Natural killer cell (primary cell): ENCODE measurements at regions of chrX and their contacts with region 1.

Region 1: GRCh38 chrX:72100824-72101351 is 30.8 kb downstream of the RTL5 start:
- DNase-seq: peak; percentile 75 to 90
- ATAC-seq: peak; percentile 61 to 85 (median 75)
- H3K4me3 ChIP-seq: peak overlapping the region; percentile 78
- H3K4me3 Mint-ChIP-seq: peak overlapping the region; percentile 92
- H3K27ac ChIP-seq: peak overlapping the region; percentile 96
- H3K27ac Mint-ChIP-seq: peak overlapping the region; percentile 88 to 91
- H3K4me1 ChIP-seq: peaks cover 71% of the 10 kb centered on the region
- H3K4me1 Mint-ChIP-seq: peaks cover 48 to 67% of the 10 kb centered on the region in 2 donors
- H3K27me3 ChIP-seq: no peaks in the 10 kb centered on the region
- H3K27me3 Mint-ChIP-seq: peaks cover 0 to 30% of the 10 kb centered on the region in 2 donors
- CTCF ChIP-seq: no peak

Region 2: DNA sequence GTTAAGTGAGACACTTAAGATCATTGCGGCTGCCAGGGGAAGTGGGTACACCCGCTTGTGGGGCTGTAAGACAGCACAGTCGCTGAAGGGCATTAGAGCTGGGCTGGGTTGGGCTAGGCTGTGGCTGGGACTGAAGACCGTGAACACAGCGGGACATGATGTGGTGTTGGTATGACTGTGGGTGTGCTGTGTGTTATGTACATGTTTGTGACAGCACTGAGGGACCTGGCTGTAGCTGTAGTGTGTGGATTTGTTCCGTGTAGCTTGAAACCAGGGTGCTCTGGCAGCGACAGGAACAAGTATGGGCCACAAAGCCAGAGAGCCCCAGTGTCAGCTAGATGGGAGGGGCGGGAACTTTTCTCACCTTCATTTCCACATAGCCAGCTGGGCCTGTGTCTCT is 108.2 kb before region 1 on chrX:
- intact Hi-C with region 1: loop called (anchors 1 kb)
- DNase-seq: peak; percentile 70 to 82
- ATAC-seq: peak; percentile 94 to 96 (median 96)
- H3K4me3 ChIP-seq: no peak overlapping the region
- H3K4me3 Mint-ChIP-seq: peak overlapping the region; percentile 79
- H3K27ac ChIP-seq: peak overlapping the region; percentile 87
- H3K27ac Mint-ChIP-seq: peak overlapping the region; percentile 86 to 88
- H3K4me1 ChIP-seq: peaks cover 44% of the 10 kb centered on the region
- H3K4me1 Mint-ChIP-seq: peaks cover 47 to 54% of the 10 kb centered on the region in 2 donors
- H3K27me3 ChIP-seq: no peaks in the 10 kb centered on the region
- H3K27me3 Mint-ChIP-seq: peaks cover 3 to 9% of the 10 kb centered on the region in 2 donors
- CTCF ChIP-seq: no peak